ENCODE measurements at regions of chr6 and their contacts with region 1.

Region 1: DNA sequence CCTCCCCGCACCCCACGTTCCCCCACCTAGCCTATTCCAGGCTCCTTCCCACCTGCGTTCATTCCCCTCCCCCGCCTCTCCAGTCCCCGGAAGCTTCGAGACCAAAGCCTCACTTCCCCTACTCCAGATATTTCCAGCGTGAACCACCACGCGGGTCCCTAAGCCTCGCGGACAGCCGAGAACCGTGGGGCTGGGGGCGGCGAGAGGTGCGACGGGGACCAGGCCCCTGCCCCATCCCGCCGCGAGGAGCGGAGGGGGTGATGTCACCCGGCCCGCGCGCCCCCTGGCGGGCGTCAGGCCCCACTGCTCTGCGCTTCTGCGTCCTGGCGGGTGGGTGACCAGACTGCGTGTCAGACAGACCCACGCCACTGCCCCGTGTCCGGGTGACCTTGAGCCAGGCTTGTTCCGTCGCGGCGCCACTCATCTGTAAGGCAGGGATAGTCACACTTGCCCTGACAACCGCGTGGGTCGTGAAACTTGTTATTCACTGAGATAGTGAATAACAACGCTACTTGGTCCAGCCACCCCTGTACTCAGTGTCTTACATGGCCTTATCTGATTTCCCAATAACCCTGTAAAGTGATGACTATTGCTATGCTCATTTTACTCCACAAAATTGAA is 9.0 kb upstream of the HSP90AB1 start:
- DNase-seq: no peak
- ATAC-seq: peak; percentile 83
- H3K4me3 ChIP-seq: peak overlapping the region; percentile 45 to 56
- H3K27ac ChIP-seq: peak overlapping the region; percentile 82
- H3K4me1 ChIP-seq: peaks cover 29 to 42% of the 10 kb centered on the region in 2 experiments
- H3K27me3 ChIP-seq: no peaks in the 10 kb centered on the region
- CTCF ChIP-seq: peak in 2 of 3 experiments; percentile 90 to 96; a peak in 4 of 6 replicates
- POLR2A ChIP-seq: no peak
- RAD21 ChIP-seq: no peak

Region 2: GRCh38 chr6:44221291-44221960 is 16.5 kb before region 1 on chr6:
- CTCF ChIA-PET with region 1: interaction called, 22 read pairs
- POLR2A ChIA-PET with region 1: interaction called, 8 read pairs
- RAD21 ChIA-PET with region 1: no interaction called
- intact Hi-C with region 1: no loop called
- DNase-seq: no peak
- ATAC-seq: peak; percentile 56
- H3K4me3 ChIP-seq: no peak overlapping the region; a peak in 1 of 4 replicates
- H3K27ac ChIP-seq: peak overlapping the region; percentile 41
- H3K4me1 ChIP-seq: peaks cover 45 to 71% of the 10 kb centered on the region in 2 experiments
- H3K27me3 ChIP-seq: no peaks in the 10 kb centered on the region
- CTCF ChIP-seq: peak in 2 of 3 experiments; percentile 68 to 83; a peak in 4 of 6 replicates
- POLR2A ChIP-seq: no peak
- RAD21 ChIP-seq: no peak

Region 3: DNA sequence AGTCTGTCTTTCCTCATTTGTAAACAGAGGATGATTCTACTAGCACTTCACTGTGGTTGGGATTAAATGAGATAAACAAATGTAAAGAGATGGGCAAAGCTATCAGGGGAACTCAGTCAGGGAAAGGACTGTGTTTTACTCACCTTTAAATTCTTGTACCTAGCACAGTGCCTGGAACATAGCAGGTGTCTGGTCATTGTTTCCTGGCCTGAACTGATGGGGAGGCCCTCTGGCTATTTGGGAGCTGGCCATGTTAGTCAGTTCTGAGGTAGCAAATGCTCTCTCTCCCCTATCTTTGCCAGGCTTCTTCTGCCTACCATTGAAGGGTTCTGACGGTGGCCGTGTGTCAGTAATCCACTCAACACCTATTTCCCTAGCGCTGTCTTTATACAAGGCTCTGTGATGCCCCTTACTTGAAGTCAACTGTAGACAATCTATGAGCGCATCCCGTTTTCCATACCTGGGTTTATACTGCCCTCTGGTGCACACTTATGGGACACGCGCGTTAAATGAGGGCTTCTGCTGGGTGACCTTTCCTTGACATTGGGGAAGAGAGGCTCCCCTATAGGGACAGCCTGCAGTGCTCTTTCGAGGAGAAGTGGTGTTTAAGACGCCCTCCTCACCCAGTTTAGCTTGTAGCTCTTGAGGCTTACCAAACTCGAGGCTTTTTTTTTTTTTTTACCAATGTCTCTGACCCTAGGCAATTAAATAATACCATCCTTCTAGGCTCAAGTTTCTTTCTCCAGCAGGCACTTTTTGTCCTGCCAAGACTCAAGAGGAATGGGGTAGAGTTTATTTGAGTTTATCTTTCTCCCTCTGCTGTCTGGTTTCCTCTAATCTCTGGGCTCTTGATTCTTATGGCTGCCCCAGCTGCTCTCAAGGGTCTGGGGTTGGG is 100.6 kb after region 1 on chr6:
- CTCF ChIA-PET with region 1: no interaction called
- POLR2A ChIA-PET with region 1: no interaction called
- RAD21 ChIA-PET with region 1: no interaction called
- intact Hi-C with region 1: loop called (anchors 1 kb)
- DNase-seq: peak; percentile 54
- ATAC-seq: peak; percentile 97
- H3K4me3 ChIP-seq: no peak overlapping the region
- H3K27ac ChIP-seq: no peak overlapping the region
- H3K4me1 ChIP-seq: no peaks in the 10 kb centered on the region
- H3K27me3 ChIP-seq: no peaks in the 10 kb centered on the region
- CTCF ChIP-seq: peak; percentile 68 to 91 (median 87)
- POLR2A ChIP-seq: no peak
- RAD21 ChIP-seq: peak; percentile 95

Region 4: DNA sequence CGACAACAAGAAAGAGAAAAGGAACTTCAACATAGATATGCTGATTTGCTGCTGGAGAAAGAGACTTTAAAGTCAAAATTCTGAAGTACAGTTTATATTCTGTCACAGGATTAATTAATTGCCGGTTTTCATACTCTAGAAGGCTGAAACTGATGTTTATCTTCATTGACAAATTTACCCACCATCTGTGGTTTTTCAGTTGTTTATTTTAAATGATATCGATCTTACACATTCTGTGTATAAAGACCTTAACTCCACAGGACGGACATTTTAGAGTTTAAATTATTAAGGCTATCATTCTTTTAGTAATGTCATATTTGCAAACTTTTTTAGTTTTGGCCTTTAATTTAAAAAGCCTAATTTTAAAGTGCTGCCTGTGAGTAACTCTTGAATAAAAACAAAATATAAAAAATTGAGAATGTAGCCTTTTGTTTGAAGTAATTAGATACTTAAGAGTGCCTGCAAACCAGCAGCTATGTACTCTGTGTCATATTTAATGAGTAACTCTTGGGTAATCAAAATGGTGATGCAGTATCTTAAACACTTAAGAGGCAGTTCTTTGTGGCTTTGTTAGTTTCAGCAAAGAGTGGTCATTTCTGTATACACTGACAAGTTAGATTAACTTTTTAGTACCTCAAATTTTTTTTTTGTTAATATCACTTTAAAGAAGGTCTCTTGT is 208.8 kb after region 1 on chr6:
- CTCF ChIA-PET with region 1: no interaction called
- POLR2A ChIA-PET with region 1: no interaction called
- RAD21 ChIA-PET with region 1: no interaction called
- intact Hi-C with region 1: no loop called
- DNase-seq: no peak
- ATAC-seq: no peak
- H3K4me3 ChIP-seq: no peak overlapping the region
- H3K27ac ChIP-seq: no peak overlapping the region
- H3K4me1 ChIP-seq: peaks cover 5 to 10% of the 10 kb centered on the region in 2 experiments; a peak in 3 of 4 replicates
- H3K27me3 ChIP-seq: no peaks in the 10 kb centered on the region
- CTCF ChIP-seq: no peak
- POLR2A ChIP-seq: no peak
- RAD21 ChIP-seq: no peak

Measured in HCT116 (cell line).